RWPE1 (cell line): ENCODE measurements at regions of chr10 and their contacts with region 1.

Region 1: DNA sequence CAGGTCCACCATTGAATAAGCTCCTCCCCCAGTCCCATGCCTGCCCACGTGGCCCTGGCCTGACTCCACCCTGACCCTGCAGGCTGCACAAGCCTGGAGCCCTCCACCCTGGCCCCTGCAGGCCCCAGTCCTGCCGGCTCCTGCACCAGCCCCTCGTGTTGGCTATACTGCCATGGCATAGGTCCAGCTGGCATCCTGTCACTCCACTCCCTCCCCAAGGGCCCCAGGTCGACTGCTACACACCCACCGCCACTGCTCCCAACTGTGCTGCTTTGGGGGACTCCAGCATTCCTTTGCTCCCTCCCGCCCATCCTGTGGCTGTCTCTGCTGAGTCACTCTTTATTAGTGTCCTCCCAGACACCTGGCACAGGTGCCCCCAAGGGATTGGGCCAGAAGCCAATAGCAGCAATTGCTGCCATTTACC is 32.4 kb upstream of the HSPA12A start:
- DNase-seq: peak; percentile 70
- H3K27ac ChIP-seq: peak overlapping the region; percentile 71
- CTCF ChIP-seq: no peak

Region 2: GRCh38 chr10:116733566-116733965 is 41.2 kb before region 1 on chr10:
- CTCF ChIA-PET with region 1: no interaction called
- POLR2A ChIA-PET with region 1: interaction called, 12 read pairs
- DNase-seq: no peak
- H3K27ac ChIP-seq: no peak overlapping the region
- CTCF ChIP-seq: no peak